Panc1 (cell line): ENCODE measurements at regions of chr18 and their contacts with region 1.

Region 1: GRCh38 chr18:47997338-47997780 is 66.9 kb upstream of the SMAD2 start:
- DNase-seq: no peak
- ATAC-seq: no peak
- H3K4me3 ChIP-seq: no peak overlapping the region
- H3K27ac ChIP-seq: no peak overlapping the region
- H3K4me1 ChIP-seq: peaks cover under 1% of the 10 kb centered on the region; the same call in 1 of the 2 replicates
- H3K27me3 ChIP-seq: no peaks in the 10 kb centered on the region
- CTCF ChIP-seq: peak; percentile 53

Region 2: GRCh38 chr18:47968006-47968676 is 29.2 kb before region 1 on chr18:
- CTCF ChIA-PET with region 1: no interaction called
- POLR2A ChIA-PET with region 1: no interaction called
- in situ Hi-C with region 1: no loop called
- intact Hi-C with region 1: no loop called
- DNase-seq: no peak
- ATAC-seq: no peak
- H3K4me3 ChIP-seq: no peak overlapping the region
- H3K27ac ChIP-seq: no peak overlapping the region
- H3K4me1 ChIP-seq: no peaks in the 10 kb centered on the region
- H3K27me3 ChIP-seq: no peaks in the 10 kb centered on the region
- CTCF ChIP-seq: no peak

Region 3: DNA sequence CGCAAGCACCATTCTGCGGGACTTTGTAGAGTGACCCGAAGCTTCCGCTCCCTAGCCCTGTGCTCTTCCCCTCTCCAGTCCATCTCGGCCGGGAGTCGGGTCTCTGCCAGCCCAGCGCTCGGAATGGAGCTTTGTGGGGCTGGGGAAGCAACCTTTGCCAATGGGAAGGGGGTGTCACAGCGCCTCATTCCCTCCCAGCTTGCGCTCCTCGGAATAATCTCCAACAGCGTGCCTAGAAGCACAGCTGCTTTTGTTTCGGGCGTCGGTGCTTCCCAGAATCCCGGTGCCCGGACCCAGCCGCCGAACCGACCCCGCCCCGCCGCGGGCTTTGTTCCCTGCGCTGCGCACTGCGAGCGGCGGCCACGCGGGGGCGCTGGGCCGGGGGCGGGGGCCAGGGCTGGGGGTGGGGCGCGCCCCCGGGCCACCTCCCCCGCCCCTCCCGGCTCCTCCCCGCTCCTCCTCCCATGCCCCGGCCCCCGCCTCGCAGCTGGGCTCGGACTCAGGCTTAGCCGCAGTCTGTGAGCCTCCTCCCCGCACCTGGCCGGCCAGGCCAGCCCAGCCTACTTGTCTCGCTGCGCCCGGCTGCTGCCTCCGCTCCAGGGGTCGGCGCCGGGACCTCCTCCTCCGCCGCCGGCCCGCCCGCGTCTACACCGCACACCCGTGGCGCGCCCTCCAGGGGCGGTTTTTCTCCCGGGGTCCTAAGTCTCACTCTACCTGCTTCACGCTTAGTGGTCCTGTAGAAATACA is 10.8 kb after region 1 on chr18:
- CTCF ChIA-PET with region 1: interaction called, 12 read pairs
- POLR2A ChIA-PET with region 1: no interaction called
- in situ Hi-C with region 1: no loop called
- intact Hi-C with region 1: no loop called
- DNase-seq: no peak
- ATAC-seq: peak; percentile 84
- H3K4me3 ChIP-seq: peak overlapping the region; percentile 54 to 56
- H3K27ac ChIP-seq: peak overlapping the region; percentile 72
- H3K4me1 ChIP-seq: peaks cover 4% of the 10 kb centered on the region
- H3K27me3 ChIP-seq: no peaks in the 10 kb centered on the region
- CTCF ChIP-seq: peak; percentile 87